Common myeloid progenitor, CD34-positive (primary cell): ENCODE measurements at regions of chr2 and their contacts with region 1.

Region 1: DNA sequence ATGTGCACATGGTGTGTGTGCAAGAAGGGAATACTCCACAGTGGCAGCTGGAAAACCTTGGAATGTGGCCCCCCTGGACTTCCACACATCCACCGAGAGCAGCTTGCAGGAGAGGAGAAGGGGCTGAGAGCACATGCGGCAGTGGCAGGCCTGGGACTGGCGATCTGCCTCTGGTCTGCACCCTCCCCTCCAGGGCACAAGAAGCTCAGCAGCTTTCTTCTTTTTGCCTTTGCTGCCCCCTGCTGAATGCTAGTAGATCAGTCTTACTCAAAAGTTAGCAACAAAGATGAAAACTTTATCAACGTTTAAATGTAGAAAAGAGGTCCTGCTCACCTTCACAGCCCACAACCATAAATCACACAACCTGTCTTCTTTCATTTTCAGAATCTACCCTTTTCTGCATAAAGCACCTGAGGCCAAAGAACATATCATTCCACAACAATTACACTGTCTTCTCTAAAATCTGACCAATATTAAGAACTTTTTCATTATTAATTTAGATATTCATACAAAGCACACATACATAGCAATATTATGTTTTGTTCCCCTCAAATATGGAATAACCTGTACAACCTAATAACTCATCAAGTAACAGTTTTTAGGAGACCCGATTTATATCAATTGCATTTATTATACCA is 34.6 kb downstream of the TGFBRAP1 start:
- DNase-seq: peak; percentile 75 to 82 (median 78)
- H3K4me3 ChIP-seq: no peak overlapping the region
- H3K27ac ChIP-seq: no peak overlapping the region
- H3K4me1 ChIP-seq: peaks cover 0 to 5% (median 1%) of the 10 kb centered on the region in 4 experiments
- H3K27me3 ChIP-seq: no peaks in the 10 kb centered on the region

Region 2: GRCh38 chr2:105309147-105309545 is 14.2 kb after region 1 on chr2:
- CTCF ChIA-PET with region 1: interaction called, 40 read pairs
- POLR2A ChIA-PET with region 1: interaction called, 12 read pairs
- DNase-seq: peak; percentile 49 to 77 (median 72)
- H3K4me3 ChIP-seq: no peak overlapping the region
- H3K27ac ChIP-seq: peak overlapping the region in 1 of 2 experiments; percentile 55
- H3K4me1 ChIP-seq: peaks cover 0 to 26% (median 24%) of the 10 kb centered on the region in 4 experiments
- H3K27me3 ChIP-seq: no peaks in the 10 kb centered on the region

Region 3: GRCh38 chr2:105324732-105325131 is 29.8 kb after region 1 on chr2:
- CTCF ChIA-PET with region 1: interaction called, 14 read pairs
- POLR2A ChIA-PET with region 1: interaction called, 3 read pairs
- DNase-seq: no peak
- H3K4me3 ChIP-seq: peak overlapping the region in 4 of 7 experiments; percentile 5 to 57 (median 27)
- H3K27ac ChIP-seq: peak overlapping the region; percentile 94
- H3K4me1 ChIP-seq: peaks cover 32 to 90% (median 75%) of the 10 kb centered on the region in 4 experiments
- H3K27me3 ChIP-seq: no peaks in the 10 kb centered on the region

Region 4: DNA sequence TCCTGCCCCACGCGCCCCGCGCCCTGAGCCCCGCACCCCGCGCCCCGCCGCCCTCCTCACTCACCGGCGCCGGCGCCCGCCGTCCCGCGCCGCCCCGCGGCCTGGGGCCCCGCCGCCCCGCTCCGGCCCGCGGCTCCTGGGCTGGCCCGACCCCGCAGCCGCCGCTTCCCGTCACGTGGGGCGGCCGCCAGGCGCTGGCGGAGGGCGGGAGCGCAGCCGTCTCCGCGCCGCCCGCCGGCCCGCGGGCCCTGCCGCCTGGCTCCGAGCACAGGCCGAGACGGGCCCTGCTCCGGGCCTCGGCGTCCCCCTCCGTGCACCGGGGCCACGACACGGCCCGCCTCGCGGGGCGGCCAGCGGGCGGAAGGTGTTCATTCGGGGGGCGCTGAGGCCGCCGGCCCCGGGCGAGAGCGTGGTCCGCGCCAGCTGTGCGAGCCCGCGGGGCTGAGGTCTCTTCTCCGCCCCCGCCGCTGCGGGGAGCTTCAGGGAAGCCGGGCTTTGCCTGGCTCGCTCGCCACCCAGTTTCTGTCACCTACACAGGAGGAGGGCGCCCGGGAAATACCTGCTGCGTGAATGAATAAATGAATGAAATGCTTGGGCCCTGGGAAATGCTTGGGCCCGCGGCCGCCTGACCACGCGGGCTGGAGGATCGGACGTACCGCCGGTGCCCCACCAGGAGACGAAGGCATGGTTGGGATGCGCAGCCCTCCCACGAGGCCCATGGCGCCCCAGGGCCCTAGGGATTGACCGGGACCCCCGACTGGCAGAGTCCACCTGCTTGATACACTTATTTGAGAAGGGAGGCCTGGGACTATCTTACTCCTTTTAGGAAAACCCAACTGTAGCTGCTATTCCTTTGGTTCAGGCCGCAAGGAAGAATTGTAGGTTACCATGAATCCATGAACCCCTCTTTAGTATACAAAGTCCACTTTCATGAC is 34.9 kb after region 1 on chr2 and contains the start of gene TGFBRAP1:
- CTCF ChIA-PET with region 1: interaction called, 14 read pairs
- POLR2A ChIA-PET with region 1: interaction called, 3 read pairs
- DNase-seq: peak in 2 of 3 donors; percentile 68 to 76
- H3K4me3 ChIP-seq: peak within 1 kb of the TSS; percentile 40 to 85 (median 76)
- H3K27ac ChIP-seq: peak within 1 kb of the TSS; percentile 90 to 96
- H3K4me1 ChIP-seq: peaks cover 13 to 58% (median 55%) of the 10 kb centered on the region in 4 experiments
- H3K27me3 ChIP-seq: no peaks in the 10 kb centered on the region